ENCODE measurements at regions of chr3 and their contacts with region 1.

Region 1: DNA sequence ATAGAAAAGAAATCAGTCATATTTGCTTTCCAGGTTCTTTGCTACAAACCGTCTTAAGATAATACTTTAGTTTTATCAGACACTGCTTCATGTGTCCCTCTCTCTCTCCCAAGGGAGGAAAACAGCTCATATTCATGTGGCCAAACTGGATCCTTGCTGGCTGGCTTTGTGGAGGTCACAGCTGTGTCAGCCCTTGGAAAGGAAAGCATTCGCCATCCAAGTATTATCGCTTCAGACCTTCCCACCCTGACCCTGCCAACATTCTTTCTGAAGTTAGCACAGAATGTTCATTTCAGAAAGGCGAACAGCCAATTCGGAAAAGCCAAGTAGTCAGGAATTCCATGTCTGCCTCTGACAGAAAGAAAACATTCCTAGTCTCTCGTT is 213.6 kb downstream of the FEZF2 start:
- DNase-seq: peak; percentile 95
- H3K4me3 ChIP-seq: peak overlapping the region in 1 of 3 experiments; percentile 26
- H3K27ac ChIP-seq: peak overlapping the region; percentile 94
- H3K4me1 ChIP-seq: peaks cover 33% of the 10 kb centered on the region
- H3K27me3 ChIP-seq: no peaks in the 10 kb centered on the region
- CTCF ChIP-seq: no peak
- POLR2A ChIP-seq: no peak

Region 2: GRCh38 chr3:61315871-61316270 is 843.8 kb before region 1 on chr3:
- CTCF ChIA-PET with region 1: no interaction called
- POLR2A ChIA-PET with region 1: no interaction called
- dilution Hi-C with region 1: no loop called
- intact Hi-C with region 1: no loop called
- DNase-seq: no peak
- H3K4me3 ChIP-seq: no peak overlapping the region
- H3K27ac ChIP-seq: no peak overlapping the region
- H3K4me1 ChIP-seq: no peaks in the 10 kb centered on the region
- H3K27me3 ChIP-seq: no peaks in the 10 kb centered on the region
- CTCF ChIP-seq: no peak
- POLR2A ChIP-seq: no peak

Region 3: DNA sequence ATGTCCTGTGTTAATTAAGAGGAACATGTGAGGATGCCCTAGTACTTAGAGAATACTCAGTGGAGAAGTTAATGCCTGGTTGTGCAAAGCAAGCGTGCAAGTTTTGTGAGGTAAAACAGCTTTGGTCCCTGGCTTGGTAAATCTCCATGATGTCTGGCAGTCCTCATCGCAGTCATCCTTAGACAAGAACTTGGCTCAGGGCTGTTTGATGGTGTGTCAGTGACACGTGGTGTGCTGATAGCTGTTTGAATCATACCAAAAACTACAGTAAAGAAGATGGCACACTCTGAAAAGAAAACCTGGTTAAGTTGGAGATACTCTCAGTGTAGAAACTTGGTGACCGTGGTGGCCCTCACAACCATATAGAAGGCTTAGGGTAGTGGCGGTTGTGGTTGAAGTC is 148.0 kb before region 1 on chr3:
- CTCF ChIA-PET with region 1: no interaction called
- POLR2A ChIA-PET with region 1: no interaction called
- dilution Hi-C with region 1: no loop called
- intact Hi-C with region 1: no loop called
- DNase-seq: no peak
- H3K4me3 ChIP-seq: no peak overlapping the region
- H3K27ac ChIP-seq: no peak overlapping the region
- H3K4me1 ChIP-seq: no peaks in the 10 kb centered on the region
- H3K27me3 ChIP-seq: no peaks in the 10 kb centered on the region
- CTCF ChIP-seq: no peak
- POLR2A ChIP-seq: no peak

Region 4: DNA sequence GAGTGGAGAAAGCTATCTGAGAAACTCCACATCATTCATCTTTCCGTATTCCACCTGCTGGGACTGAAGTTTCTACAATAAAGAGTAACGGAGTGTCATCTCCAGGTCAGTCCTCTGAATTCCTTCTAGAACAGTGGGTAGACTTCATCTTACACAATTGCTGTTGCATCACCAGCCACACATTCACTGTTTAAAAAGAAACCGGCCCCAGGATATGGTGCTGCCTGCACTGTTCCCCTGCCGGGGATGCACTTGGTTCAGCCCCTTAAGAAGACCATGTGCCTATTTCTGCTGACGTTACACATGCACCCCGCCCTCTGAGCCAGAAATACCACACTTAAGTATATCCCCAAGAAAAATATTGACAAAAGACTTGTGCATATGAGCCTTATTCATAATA is 19.8 kb before region 1 on chr3:
- CTCF ChIA-PET with region 1: interaction called, 7 read pairs
- POLR2A ChIA-PET with region 1: no interaction called
- dilution Hi-C with region 1: no loop called
- intact Hi-C with region 1: loop called (anchors 1 kb)
- DNase-seq: no peak
- H3K4me3 ChIP-seq: no peak overlapping the region
- H3K27ac ChIP-seq: no peak overlapping the region
- H3K4me1 ChIP-seq: peaks cover 14% of the 10 kb centered on the region
- H3K27me3 ChIP-seq: no peaks in the 10 kb centered on the region
- CTCF ChIP-seq: no peak
- POLR2A ChIP-seq: no peak

Region 5: GRCh38 chr3:62169906-62170660 is 10.4 kb after region 1 on chr3:
- CTCF ChIA-PET with region 1: interaction called, 27 read pairs
- POLR2A ChIA-PET with region 1: interaction called, 3 read pairs
- dilution Hi-C with region 1: no loop called
- intact Hi-C with region 1: loop called (anchors 1 kb)
- DNase-seq: peak; percentile 74
- H3K4me3 ChIP-seq: no peak overlapping the region
- H3K27ac ChIP-seq: peak overlapping the region; percentile 95
- H3K4me1 ChIP-seq: peaks cover 21% of the 10 kb centered on the region
- H3K27me3 ChIP-seq: no peaks in the 10 kb centered on the region
- CTCF ChIP-seq: no peak
- POLR2A ChIP-seq: no peak

Region 6: DNA sequence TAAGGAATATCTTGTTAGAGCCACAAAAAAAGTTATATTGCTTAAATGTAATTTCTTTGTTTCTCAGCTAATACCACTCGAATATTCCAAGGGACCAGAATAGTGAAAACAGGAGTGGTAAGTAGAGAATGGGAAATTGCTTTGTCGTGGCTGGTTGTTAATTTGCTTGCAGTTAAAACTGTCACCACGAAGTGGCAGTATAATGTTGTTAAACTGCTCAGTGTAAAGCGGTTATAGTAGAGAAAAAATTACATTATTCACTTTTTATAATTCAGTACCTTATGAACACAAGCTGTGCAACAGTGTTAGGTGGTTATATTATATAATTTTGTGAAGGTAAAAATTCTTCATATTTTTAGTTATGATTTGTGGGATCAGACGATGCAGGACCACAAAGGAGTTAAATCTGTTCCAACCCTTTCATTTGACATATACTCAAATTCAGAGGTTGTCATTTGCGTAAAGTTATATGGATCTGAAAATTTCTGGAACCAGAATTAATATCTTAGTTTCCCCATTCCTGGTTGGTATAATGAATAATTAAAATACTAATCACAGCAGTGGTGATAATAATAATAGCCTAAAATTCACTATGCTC is 41.8 kb after region 1 on chr3:
- CTCF ChIA-PET with region 1: no interaction called
- POLR2A ChIA-PET with region 1: no interaction called
- dilution Hi-C with region 1: no loop called
- intact Hi-C with region 1: no loop called
- DNase-seq: peak; percentile 59
- H3K4me3 ChIP-seq: no peak overlapping the region
- H3K27ac ChIP-seq: no peak overlapping the region
- H3K4me1 ChIP-seq: no peaks in the 10 kb centered on the region
- H3K27me3 ChIP-seq: no peaks in the 10 kb centered on the region
- CTCF ChIP-seq: peak; percentile 36 to 40
- POLR2A ChIP-seq: no peak

Region 7: GRCh38 chr3:62467966-62468722 is 308.4 kb after region 1 on chr3:
- CTCF ChIA-PET with region 1: no interaction called
- POLR2A ChIA-PET with region 1: no interaction called
- dilution Hi-C with region 1: no loop called
- intact Hi-C with region 1: no loop called
- DNase-seq: no peak
- H3K4me3 ChIP-seq: no peak overlapping the region
- H3K27ac ChIP-seq: no peak overlapping the region
- H3K4me1 ChIP-seq: no peaks in the 10 kb centered on the region
- H3K27me3 ChIP-seq: no peaks in the 10 kb centered on the region
- CTCF ChIP-seq: no peak
- POLR2A ChIP-seq: no peak

Measured in endothelial cell of umbilical vein (primary cell).